Endothelial cell of umbilical vein (primary cell): ENCODE measurements at regions of chr22 and their contacts with region 1.

Region 1: GRCh38 chr22:26835929-26836528 is 178.6 kb downstream of the MIAT start:
- DNase-seq: peak; percentile 42
- H3K4me3 ChIP-seq: no peak overlapping the region
- H3K27ac ChIP-seq: no peak overlapping the region
- H3K4me1 ChIP-seq: no peaks in the 10 kb centered on the region
- H3K27me3 ChIP-seq: no peaks in the 10 kb centered on the region
- CTCF ChIP-seq: peak; percentile 51 to 71
- POLR2A ChIP-seq: no peak

Region 2: DNA sequence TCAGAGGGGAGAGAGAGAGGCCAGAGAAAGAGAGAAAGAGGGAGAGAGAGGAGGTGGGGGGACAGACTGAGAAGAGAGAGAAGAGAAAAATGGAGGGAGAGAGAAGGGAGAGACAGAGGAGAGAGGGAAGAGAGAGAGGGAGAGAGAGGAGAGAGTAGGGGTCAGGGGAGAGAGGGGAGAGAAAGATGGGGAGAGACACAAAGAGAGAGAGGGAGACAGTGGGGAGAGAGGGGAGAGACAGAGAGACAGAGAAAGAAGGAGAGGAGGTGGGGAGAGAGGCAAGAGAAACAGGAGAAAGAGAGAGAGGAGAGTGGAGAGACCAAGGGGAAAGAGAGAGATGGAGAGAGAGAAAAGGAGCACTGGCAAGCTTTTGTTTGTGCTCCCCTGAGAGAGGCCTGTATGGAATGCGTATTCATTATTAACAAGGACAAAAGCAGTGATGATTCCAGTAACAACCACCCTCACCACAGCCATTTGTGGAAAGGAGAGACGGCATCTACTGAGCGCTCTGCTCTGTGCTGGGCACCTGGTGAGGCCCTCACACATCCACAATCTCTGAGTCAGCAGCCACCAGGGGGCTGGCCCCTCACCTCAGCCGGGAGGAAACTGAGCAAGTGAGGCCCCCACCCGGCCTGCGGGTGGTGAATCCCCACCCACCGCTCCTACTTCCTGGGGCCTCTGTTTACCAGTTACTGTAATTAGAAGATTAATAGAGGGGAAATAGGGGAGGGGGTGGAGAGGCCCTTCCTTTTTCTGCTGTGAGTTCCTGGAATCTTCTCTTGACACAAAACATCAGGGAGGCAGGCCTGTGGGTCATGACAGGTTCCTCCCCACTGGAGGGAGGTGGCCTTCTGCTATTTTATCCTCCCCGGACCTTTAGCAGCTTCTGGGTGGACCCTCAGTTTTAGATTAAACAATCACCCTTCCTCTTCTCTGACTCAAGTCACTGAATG is 193.3 kb before region 1 on chr22:
- CTCF ChIA-PET with region 1: no interaction called
- POLR2A ChIA-PET with region 1: no interaction called
- dilution Hi-C with region 1: no loop called
- intact Hi-C with region 1: no loop called
- DNase-seq: no peak
- H3K4me3 ChIP-seq: no peak overlapping the region
- H3K27ac ChIP-seq: no peak overlapping the region
- H3K4me1 ChIP-seq: peaks cover 7% of the 10 kb centered on the region
- H3K27me3 ChIP-seq: peaks cover 5 to 8% of the 10 kb centered on the region in 2 experiments
- CTCF ChIP-seq: peak in 1 of 2 donors; percentile 7
- POLR2A ChIP-seq: no peak

Region 3: DNA sequence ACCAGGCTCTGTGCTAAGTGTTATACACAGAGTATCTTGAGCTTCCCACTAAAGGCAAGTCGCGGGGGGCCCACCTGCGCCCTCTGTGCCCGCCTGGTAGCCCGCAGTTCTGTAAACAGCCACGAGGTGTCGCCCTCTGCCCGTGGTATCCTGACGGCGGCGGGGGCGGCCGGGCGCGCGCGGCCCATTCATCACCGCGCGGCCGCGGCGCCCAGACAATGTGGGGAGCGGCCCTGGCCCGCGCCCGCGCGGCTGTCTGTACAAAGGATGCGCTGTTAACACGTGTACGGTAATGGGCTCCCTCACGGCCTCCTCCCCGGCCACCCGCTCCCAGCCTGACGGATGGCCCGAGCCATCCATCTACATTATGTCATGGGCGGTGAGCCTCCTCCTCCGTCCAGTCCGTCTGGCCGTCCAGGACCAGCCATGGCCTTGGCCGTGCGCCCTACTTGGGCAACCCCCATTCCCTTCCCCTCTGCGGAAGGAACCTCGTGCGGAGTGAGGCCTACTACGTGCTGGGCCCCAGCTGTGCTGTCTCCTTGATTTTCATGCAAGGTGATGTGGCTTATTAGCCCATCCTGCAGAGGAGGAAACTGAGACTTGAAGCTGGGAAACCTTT is 79.2 kb before region 1 on chr22:
- CTCF ChIA-PET with region 1: interaction called, 3 read pairs
- POLR2A ChIA-PET with region 1: no interaction called
- dilution Hi-C with region 1: no loop called
- intact Hi-C with region 1: loop called (anchors 5 kb)
- DNase-seq: peak; percentile 46
- H3K4me3 ChIP-seq: peak overlapping the region in 2 of 3 experiments; percentile 13 to 29
- H3K27ac ChIP-seq: no peak overlapping the region
- H3K4me1 ChIP-seq: peaks cover 5% of the 10 kb centered on the region
- H3K27me3 ChIP-seq: no peaks in the 10 kb centered on the region
- CTCF ChIP-seq: peak; percentile 75 to 88
- POLR2A ChIP-seq: no peak